GM18951 (cell line): ENCODE measurements at regions of chr9 and their contacts with region 1.

Region 1: DNA sequence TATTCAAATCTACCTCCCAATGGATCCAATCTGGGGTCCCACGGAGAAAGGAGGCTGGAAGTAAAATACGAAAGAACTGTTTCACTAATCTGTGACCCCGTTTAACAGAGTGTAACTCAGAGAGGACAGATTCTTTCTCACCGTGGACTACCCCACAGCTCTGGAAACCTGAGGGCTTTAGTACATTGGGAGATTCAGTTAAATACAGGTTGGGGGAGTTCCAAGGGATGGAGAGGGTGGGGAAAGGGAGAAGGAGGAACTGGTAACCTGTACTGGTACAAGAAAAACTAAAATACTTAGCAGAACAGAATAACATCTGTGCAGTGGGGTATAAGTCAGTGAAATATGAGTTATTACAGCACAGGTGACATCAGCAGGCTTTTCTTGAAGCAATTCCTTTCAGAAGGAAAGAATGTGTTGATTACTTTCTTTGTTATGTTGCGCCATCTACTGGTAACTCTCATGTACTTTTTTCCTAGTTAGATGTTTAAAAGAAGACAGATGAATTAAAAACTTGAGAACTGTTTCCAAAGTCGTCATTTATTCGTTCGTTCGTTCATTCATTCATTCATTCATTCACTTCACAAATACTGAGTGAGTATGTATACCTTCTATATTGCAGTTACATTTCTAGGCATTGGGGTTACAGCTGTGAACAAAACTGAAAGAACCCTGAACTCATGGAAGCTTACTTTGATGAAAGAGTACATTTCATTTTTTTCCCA is 30.0 kb upstream of the STOM start:
- POLR2A ChIP-seq: no peak

Region 2: DNA sequence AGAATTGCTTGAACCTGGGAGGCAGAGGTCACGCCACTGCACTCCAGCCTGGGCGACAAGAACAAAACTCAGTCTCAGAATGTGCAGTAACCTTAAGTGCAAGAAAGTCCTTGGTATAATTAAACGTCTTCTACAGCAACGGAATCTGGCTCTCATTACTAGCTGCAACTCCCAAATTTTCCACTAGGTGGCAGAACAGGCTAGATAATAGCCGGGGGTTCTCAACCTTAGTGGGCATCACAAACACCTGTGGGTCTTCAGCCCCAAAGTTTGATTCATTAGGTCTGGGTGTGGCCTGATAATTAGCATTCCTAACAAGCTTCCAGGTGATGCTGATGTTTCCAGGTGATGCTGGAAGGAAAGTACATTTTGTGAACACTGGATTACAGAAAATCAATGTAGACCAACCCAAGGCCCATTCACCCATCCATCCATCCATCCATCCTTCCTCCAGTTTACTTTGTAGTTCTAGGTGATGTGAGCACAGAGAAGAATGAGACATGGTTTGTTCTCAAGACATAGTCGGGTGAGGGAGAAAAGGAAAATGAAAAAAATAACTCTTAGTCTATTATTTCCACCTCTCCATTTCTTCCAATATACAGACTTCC is 644.1 kb before region 1 on chr9:
- in situ Hi-C with region 1: loop called (anchors 25 kb)
- POLR2A ChIP-seq: no peak

Region 3: GRCh38 chr9:121156263-121156731 is 243.7 kb before region 1 on chr9:
- in situ Hi-C with region 1: no loop called
- POLR2A ChIP-seq: no peak

Region 4: DNA sequence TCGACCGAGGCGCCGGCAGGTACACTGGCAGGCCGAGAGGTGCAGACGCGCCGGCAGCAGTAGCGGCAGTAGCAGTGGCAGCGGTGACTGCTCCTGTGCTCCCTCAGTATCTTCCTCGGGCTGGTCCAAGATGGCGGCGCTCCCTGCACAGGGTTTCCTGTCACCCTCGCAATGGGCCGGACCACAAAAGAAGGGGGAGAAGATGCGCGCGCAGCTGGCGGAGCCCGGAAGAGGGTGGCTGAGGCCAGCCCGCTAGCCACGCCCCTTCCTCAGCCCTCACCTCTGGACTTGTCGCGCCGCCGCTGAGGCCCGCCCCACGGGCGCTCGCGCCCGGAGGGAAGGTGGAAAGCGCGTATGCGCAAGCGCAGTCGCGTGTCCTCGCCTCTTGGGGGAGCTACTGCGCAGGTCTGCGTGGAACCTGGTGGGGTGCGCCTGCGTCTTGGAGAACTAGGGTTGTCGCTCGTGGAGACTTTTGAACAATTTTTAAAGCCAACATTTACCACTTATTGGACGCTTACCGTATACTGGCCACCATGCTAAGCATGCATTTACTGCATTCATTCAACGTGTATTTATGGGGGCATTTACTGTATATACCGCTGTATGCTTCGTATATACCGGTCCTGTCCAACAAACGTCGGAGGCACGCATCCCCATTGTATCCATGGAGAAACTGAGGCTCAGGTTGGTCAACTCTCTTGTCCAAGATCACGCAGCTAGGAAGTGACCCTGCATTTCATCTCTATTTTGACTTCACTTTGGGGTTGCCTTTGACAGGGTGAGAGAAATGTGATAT is 198.1 kb before region 1 on chr9 and contains the start of gene RAB14:
- in situ Hi-C with region 1: loop called (anchors 25 kb)
- POLR2A ChIP-seq: peak; percentile 82

Region 5: DNA sequence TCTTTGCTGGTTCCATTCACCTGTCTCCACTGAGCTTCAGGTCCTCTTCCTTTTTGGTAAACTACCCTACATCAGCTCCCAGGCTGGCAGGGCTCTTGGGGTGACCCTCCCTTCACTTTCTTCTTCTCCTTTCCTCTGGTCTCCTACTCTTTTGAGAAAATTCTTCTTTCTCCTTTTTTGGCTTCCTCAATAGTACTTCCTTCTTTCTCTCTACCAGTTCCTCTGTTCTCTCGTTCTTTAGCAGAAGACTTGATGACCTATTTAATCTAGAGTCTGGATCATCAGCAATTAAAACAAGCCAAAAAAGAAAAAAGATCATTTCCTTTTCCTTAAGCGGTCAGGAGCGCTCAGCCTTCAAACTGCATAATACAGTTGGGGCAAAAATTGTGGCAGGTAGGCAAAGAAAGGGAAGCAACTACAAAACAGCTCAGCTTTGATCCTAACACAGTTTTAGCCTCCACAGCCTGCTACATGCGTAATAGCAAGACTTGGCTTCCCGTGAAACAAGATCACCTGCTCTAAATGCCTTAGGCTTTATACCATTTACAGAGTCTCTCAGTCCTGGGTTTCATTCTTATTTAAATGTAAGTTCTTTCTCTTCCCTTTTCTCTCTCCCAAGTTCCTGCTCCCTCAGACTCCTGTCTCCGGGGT is 146.1 kb before region 1 on chr9:
- in situ Hi-C with region 1: no loop called
- POLR2A ChIP-seq: no peak